IMR-90 (cell line): ENCODE measurements at regions of chr3 and their contacts with region 1.

Region 1: DNA sequence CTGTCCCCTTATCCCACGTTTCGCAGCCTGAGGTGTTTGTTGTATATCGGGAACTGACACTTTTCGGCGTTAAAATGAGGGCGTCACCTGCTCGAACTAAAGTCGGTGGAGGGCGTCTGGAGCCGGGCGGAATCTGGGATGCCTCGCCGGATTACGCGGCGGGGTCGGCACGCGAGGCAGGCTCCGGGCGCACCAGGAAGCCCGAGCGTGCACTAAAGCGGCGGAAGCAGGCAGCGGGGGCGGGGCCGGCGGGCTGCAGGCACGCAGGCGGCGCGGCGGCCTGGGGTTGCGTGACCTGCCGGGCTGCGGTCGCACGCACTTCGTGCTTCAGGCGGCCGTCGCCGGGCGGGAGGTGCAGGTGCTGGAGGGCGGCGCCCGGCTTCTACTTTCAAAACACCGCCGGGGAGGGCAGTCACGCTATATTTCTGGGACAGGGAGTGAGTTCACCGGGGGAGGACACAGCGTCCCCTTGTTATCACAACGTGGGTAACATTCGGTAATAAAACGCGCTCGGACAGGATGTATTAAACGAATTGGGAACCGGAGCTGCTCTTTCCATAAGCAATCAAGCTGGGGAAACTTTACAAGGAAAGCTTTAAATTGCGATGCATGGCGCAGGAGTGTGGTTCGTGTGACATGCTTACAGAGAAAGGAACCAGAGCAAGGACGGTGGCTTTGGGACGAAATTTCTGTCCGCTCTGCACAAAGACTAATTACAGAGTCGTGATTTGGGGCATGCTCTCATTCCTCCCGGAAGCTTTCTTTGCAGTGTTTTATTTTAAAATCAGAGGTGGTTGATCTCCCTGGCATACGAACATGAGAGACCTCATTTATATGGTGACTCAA is 9.1 kb upstream of the LEKR1 start:
- DNase-seq: peak; percentile 90
- ATAC-seq: peak; percentile 70
- H3K4me3 ChIP-seq: peak overlapping the region; percentile 44
- H3K27ac ChIP-seq: peak overlapping the region; percentile 96
- H3K4me1 ChIP-seq: peaks cover 24% of the 10 kb centered on the region
- H3K27me3 ChIP-seq: no peaks in the 10 kb centered on the region
- CTCF ChIP-seq: peak; percentile 30
- POLR2A ChIP-seq: peak; percentile 69; the same call in 1 of the 2 replicates
- RAD21 ChIP-seq: peak; percentile 37; the same call in 1 of the 2 replicates

Region 2: DNA sequence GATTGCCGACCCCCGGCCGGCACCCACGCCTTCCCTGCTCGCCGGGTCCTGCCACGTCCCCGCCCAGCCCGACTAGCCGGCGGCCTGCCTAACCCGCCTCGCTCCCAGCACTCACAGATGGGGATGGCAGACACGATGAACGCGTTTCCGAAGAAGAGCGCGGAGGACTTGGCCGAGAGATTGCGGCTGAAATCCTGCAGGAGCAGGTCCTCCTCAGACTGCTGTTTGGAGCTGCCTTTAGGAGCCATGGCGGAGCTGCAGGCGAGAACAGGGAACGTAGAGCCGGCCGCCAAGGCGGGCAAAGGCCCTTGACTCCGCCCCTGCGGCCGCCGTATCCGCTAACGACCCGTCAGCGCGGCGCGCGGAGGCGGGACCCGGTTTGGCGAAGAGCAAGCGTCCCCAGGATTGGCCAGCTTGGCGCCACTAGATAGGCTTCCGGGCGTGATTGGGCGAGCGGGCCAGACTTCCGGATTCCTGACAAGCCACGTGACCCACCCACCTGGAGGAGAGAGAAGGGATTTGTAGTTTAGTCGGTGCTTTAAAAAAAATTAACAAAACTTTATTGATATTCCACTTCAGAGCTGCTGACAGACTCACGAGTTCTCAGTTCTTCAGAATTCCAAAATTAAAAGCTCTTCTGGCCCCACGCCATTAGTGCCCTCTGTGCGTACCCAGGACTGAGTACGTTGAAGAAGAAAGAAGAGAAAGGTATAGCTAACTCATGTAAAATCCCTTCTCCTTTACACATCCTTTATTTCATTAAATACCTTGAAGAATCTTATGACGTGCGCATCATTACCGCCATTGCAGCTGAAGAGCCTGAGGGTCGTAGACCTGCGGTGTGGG is 262.0 kb before region 1 on chr3 and contains the start of gene SSR3:
- CTCF ChIA-PET with region 1: no interaction called
- POLR2A ChIA-PET with region 1: no interaction called
- dilution Hi-C with region 1: no loop called
- in situ Hi-C with region 1: no loop called
- intact Hi-C with region 1: loop called (anchors 5 kb)
- DNase-seq: peak; percentile 100
- ATAC-seq: peak; percentile 97
- H3K4me3 ChIP-seq: peak within 1 kb of the TSS; percentile 76
- H3K27ac ChIP-seq: peak within 1 kb of the TSS; percentile 100
- H3K4me1 ChIP-seq: peaks cover 9% of the 10 kb centered on the region
- H3K27me3 ChIP-seq: no peaks in the 10 kb centered on the region
- CTCF ChIP-seq: no peak
- POLR2A ChIP-seq: peak; percentile 97
- RAD21 ChIP-seq: 0 out of 2 replicates have a peak, but pooled peaks have one; percentile 5
- total RNA-seq, gene SSR3: 606 and 608 TPM in 2 replicates

Region 3: DNA sequence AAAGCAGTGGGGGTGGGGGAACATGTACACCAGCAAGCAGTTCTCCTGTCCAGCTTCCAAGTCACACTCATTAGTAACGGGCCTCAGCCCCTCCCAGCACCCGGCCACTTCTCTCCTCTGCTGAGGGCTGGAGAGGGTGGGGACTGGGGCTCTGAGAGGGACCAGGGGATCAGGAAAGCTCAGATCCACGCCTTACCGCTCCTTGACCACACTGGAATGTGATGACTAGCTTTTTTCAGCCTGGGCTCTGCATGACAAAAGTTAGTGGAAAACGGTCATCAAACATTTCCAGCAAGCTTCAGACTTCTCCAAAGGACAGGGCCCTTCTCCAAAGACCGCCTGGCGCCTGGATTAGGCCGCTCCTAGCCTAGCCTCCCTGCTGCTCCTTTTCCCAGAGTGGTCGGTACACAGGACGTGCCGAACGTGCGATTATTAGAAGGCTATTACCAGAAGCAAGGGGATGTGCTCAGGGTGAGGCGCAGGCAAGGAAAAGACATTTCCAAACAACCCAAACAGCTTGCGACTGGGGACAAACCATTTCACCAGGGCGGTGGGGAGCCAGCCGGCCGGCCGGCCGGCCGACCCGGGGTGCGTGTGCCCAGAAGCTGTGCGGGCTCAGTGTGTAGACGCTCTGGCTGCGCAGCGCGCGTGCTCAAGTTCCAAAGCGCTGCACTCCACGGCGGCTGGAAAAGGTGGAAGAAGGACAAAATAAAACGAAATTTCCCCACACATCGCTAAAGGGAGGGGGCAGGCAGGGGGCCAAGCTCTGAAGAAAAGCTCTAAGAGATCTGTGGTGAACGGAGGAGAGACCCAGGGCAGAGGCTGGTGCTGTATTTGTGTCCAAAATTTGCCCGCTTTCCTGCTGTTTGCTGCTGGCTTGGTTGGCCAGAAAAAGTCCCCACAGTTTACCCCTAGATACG is 211.1 kb before region 1 on chr3:
- CTCF ChIA-PET with region 1: no interaction called
- POLR2A ChIA-PET with region 1: no interaction called
- dilution Hi-C with region 1: no loop called
- in situ Hi-C with region 1: no loop called
- intact Hi-C with region 1: no loop called
- DNase-seq: peak; percentile 69
- ATAC-seq: peak; percentile 91
- H3K4me3 ChIP-seq: peak overlapping the region; percentile 40
- H3K27ac ChIP-seq: peak overlapping the region; percentile 79
- H3K4me1 ChIP-seq: peaks cover 3% of the 10 kb centered on the region; the same call in 1 of the 2 replicates
- H3K27me3 ChIP-seq: no peaks in the 10 kb centered on the region
- CTCF ChIP-seq: no peak
- POLR2A ChIP-seq: peak; percentile 29; the same call in 1 of the 2 replicates
- RAD21 ChIP-seq: no peak

Region 4: DNA sequence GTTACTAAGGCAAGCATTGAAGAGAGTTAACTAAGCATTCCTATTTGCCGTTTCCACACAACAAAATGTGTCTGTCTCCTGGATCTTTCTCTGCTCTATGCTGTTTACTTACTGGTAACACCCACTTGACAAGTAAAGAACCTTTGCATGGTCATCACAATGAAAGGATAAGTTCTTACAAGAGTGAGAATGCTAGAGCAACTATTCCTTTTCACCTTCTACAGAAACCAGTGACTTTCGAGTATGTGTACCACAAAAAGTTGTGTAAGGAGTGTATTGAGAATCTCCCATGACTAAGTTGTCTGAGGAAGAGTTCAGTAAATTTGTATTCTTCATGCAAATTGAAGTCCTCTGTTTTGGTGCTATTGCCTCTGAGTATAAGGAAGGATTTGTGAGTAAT is 131.8 kb before region 1 on chr3:
- CTCF ChIA-PET with region 1: no interaction called
- POLR2A ChIA-PET with region 1: no interaction called
- dilution Hi-C with region 1: no loop called
- in situ Hi-C with region 1: loop called (anchors 5 kb)
- intact Hi-C with region 1: loop called (anchors 5 kb)
- DNase-seq: peak; percentile 53
- ATAC-seq: peak; percentile 28
- H3K4me3 ChIP-seq: no peak overlapping the region
- H3K27ac ChIP-seq: peak overlapping the region; percentile 19; the same call in 1 of the 2 replicates
- H3K4me1 ChIP-seq: peaks cover 29% of the 10 kb centered on the region
- H3K27me3 ChIP-seq: no peaks in the 10 kb centered on the region
- CTCF ChIP-seq: no peak
- POLR2A ChIP-seq: no peak; the same call in 1 of the 2 replicates
- RAD21 ChIP-seq: no peak

Region 5: DNA sequence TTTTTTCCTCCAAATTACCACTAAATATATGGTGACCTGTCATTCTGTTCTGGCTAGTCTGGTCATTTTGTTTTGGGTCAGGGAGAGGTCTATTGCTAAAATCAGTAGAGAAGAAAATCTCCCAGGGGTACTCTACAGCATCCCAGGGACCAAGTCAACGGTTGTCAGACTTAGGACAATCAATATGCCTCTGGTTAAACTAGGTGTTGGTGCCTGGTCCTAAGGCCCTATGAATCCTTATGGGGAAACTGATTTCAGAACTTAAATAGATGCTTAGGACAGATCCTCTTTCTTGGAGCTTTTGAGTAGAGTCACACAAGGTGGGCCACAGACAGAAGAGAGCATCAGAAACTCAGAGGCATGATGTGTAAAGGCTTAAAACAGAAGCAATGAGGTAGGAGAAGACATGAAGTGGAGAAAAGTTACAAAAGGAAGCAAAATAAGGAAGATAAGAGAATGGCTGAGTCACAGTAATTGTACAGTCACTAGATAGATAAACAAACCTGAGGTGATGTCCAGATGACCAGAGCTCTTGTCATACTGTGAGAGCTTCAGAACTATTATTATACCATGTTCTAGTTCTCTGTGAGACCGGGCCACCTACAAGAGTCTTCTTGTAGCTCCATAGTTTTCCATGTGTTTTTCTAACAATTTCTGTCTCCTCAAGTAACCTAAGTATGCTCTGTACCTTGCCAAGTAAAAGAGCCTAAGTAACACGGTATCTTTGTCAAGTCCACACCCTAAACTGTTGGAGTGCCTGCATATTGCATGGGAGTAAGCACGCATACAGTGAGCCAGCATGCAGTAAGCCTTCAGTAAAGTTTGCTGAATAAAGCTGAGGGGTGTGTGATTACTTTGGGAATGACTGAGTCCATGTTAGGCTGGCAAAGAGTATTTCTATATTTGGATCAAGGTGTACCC is 35.5 kb before region 1 on chr3:
- CTCF ChIA-PET with region 1: no interaction called
- POLR2A ChIA-PET with region 1: no interaction called
- dilution Hi-C with region 1: no loop called
- in situ Hi-C with region 1: no loop called
- intact Hi-C with region 1: no loop called
- DNase-seq: peak; percentile 85
- ATAC-seq: peak; percentile 19; the same call in 1 of the 2 replicates
- H3K4me3 ChIP-seq: no peak overlapping the region
- H3K27ac ChIP-seq: peak overlapping the region; percentile 77
- H3K4me1 ChIP-seq: peaks cover 10% of the 10 kb centered on the region
- H3K27me3 ChIP-seq: no peaks in the 10 kb centered on the region
- CTCF ChIP-seq: no peak
- POLR2A ChIP-seq: peak; percentile 12; the same call in 1 of the 2 replicates
- RAD21 ChIP-seq: 0 out of 2 replicates have a peak, but pooled peaks have one; percentile 4

Region 6: GRCh38 chr3:156795890-156796481 is 21.0 kb before region 1 on chr3:
- CTCF ChIA-PET with region 1: interaction called, 4 read pairs
- POLR2A ChIA-PET with region 1: interaction called, 21 read pairs
- dilution Hi-C with region 1: no loop called
- in situ Hi-C with region 1: no loop called
- intact Hi-C with region 1: no loop called
- DNase-seq: peak; percentile 84
- ATAC-seq: peak; percentile 35
- H3K4me3 ChIP-seq: no peak overlapping the region
- H3K27ac ChIP-seq: no peak overlapping the region
- H3K4me1 ChIP-seq: peaks cover 6% of the 10 kb centered on the region
- H3K27me3 ChIP-seq: no peaks in the 10 kb centered on the region
- CTCF ChIP-seq: no peak
- POLR2A ChIP-seq: no peak
- RAD21 ChIP-seq: no peak

Region 7: GRCh38 chr3:156859578-156859977 is 42.6 kb after region 1 on chr3:
- CTCF ChIA-PET with region 1: no interaction called
- POLR2A ChIA-PET with region 1: no interaction called
- dilution Hi-C with region 1: no loop called
- in situ Hi-C with region 1: no loop called
- intact Hi-C with region 1: no loop called
- DNase-seq: no peak
- ATAC-seq: no peak
- H3K4me3 ChIP-seq: no peak overlapping the region
- H3K27ac ChIP-seq: no peak overlapping the region
- H3K4me1 ChIP-seq: no peaks in the 10 kb centered on the region
- H3K27me3 ChIP-seq: no peaks in the 10 kb centered on the region
- CTCF ChIP-seq: no peak
- POLR2A ChIP-seq: no peak
- RAD21 ChIP-seq: no peak

Region 8: DNA sequence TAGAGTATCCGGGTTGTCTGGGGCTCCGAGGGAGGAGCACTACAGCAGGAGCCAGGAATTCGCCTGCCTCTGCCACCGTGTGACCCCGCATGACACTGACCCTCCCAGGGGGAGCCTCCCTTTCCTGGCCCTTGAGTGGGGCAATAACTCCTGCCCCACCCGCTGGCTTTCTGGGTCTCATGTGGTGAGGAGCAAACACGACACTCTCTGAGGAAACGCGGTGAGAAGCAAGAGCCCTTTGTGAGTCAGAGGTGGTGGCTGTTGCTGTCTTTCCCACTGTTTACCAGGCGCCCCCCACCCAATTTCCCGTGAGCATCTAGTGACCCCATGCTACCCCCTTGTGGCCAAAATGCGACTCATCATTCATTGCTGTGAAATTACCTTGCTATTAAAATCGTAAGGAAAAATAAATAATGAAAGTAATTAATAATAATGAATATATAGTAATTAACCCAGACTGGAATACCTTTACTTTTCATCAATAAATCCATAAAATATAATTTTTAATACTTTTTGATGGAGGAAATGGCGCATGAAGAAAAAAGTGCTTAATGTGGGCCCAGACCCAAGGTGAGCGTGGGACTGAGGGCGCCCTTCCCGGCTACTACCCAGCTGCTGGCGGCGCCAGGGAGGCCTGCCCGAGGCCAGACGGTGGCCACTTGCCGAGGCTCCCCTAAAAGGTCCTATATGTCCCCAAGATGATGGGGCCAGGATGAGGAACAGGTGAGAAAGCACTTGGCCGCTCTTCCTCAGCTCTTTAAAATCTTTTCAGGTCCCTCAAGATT is 313.6 kb after region 1 on chr3:
- CTCF ChIA-PET with region 1: no interaction called
- POLR2A ChIA-PET with region 1: no interaction called
- dilution Hi-C with region 1: no loop called
- in situ Hi-C with region 1: no loop called
- intact Hi-C with region 1: loop called (anchors 2 kb)
- DNase-seq: peak; percentile 64
- ATAC-seq: no peak
- H3K4me3 ChIP-seq: no peak overlapping the region
- H3K27ac ChIP-seq: 0 out of 2 replicates have a peak overlapping the region, but pooled peaks have one; percentile 10
- H3K4me1 ChIP-seq: peaks cover 35% of the 10 kb centered on the region
- H3K27me3 ChIP-seq: no peaks in the 10 kb centered on the region
- CTCF ChIP-seq: peak; percentile 74
- POLR2A ChIP-seq: no peak
- RAD21 ChIP-seq: peak; percentile 76